ENCODE measurements at regions of chr17 and their contacts with region 1.

Region 1: DNA sequence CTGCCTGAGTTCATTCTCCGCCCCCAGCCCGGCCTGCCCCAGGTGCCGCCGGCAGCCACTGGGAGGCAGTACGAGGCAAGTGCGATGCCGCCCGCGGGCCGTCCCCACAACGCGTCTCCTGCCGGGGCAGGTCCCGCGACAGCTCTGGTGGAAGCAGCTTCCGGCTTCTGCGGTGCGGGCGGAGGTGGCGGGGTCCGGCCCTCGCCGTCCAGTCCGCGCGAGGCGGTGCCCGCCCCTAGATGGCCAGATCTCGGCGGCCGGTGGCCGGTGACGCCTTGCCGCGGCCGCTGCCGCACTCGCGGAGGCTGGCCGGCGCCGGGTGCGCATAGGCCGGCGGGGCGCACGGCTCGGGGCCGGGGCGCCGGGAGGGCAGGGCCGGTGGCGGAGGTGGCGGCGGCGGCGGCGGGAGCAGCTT is 1.8 kb downstream of the GJD3 start:
- DNase-seq: peak; percentile 92
- CTCF ChIP-seq: peak; percentile 90

Region 2: GRCh38 chr17:40150276-40150675 is 212.4 kb before region 1 on chr17:
- CTCF ChIA-PET with region 1: no interaction called
- POLR2A ChIA-PET with region 1: interaction called, 12 read pairs
- DNase-seq: no peak
- CTCF ChIP-seq: no peak

Region 3: GRCh38 chr17:40317880-40318829 is 44.5 kb before region 1 on chr17:
- CTCF ChIA-PET with region 1: interaction called, 604 read pairs
- POLR2A ChIA-PET with region 1: no interaction called
- DNase-seq: peak; percentile 98
- CTCF ChIP-seq: no peak

Region 4: DNA sequence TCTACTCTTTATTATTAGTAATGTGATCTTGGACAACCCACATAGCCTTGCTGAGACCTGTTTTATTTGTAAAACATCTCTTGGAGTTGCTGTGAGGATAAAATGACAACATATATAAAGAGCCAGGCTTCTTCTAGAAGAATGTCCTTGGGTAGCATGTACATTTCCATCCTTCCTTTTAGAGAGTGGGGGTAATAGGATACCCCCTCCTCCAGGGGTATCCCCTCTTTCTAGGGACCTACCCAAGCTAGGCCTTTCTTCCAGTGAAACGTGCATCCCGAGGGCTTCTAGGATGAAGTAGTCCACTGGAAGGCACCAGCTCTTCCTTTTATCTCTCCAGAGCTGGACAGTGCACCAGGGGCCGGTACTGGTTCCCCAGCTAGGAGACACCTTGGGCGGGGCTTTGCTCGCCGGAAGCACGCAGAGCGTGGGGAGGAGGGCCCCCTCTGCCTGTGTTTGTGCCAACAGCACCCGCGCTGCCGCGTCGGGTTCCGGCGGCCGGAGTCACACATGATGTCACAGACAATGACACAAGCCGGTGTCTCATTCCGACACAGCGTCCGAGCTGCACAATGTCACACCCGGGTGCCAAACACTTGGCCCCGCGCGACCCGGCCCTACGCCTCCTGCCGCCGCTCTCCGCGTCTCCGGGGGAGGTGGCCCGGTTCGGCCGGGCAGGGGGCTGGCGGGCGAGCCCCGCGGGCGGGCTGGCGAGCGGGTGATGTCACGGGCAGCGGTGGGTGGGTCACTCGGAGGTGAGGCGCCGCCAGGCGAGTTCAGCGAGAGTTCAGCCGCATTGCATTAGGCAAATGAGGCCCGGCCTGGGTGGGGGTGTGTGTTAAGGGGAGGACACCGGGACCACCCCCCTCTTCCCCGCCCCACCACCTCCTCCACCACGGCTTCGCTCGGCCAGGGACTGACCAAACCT is 21.6 kb before region 1 on chr17:
- CTCF ChIA-PET with region 1: interaction called, 11 read pairs
- POLR2A ChIA-PET with region 1: no interaction called
- DNase-seq: peak; percentile 83
- CTCF ChIP-seq: no peak

Region 5: DNA sequence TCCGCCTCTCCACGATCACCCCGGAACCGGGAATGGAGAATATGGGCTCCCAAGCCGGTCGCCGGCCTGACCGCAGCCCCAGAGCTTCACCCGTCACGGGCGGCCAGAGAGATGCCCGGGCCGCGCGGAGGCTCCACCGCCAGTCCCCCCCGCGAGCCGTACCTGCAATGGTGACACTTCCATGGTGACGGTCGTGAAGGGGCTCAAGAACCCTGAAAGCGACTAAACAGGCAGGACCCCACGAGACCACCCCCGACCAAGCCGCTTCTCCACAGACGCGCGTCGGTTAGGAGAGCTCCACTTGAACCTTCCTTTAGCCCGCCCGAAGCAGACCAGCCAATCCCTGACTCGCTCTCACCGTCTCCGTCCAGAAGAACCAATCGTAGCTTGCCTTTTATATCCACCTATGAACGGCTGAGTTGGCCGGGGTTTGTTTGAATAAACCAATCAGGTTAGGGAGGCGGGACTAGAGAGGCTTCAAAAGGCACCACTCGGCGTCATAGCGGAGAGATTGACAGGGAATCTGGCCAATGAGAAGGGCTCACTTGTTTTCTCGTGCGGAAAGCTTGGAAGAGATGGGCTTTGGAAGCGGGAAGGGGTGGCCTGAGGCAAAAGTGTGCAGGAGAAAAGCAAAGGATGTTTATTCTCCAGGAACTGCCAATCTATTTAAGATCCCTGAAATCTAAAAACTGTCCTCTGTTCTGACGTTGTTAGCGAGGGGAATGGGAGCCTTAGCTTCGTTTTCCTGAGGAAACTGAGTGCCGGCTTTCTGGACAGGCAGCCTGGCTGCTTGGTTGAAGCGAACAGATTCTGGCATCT is 55.1 kb after region 1 on chr17 and contains the start of gene TOP2A:
- CTCF ChIA-PET with region 1: interaction called, 10 read pairs
- POLR2A ChIA-PET with region 1: no interaction called
- DNase-seq: peak; percentile 100
- CTCF ChIP-seq: no peak

Region 6: DNA sequence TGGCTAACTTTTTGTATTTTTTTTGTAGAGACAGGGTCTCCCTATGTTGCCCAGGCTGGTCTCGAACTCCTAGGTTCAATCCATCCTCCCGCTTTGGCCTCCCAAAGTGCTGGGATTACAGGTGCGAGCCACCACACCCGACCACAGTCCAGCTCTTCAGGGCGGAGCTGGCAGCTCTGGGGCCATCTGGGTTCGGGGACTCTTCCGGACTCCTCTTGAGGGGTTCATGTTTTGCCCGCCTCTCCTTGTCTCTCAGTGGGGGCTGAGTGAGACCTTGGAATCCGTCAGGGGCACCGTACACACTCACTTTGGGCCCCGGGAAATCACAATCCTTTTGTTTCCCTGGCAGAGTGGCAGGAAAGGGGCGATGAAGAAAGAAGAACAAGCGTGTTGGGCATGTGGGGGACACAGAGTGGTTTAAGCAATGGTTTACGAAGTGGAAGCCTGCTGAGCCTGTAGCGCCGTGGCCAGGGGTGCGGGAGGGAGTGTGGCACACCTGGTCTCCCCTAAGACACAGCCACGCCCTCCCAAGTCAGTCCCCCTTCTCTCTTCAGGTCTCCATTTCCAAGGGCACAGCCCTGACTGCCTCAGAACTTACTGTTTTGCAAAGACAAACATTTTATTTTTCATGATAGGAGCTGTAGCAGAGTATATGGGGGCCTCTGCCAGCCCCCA is 112.7 kb after region 1 on chr17:
- CTCF ChIA-PET with region 1: interaction called, 12 read pairs
- POLR2A ChIA-PET with region 1: no interaction called
- DNase-seq: no peak
- CTCF ChIP-seq: no peak

Region 7: GRCh38 chr17:40536295-40537171 is 173.8 kb after region 1 on chr17:
- CTCF ChIA-PET with region 1: interaction called, 216 read pairs
- POLR2A ChIA-PET with region 1: no interaction called
- DNase-seq: no peak
- CTCF ChIP-seq: no peak

Measured in GM10248 (cell line).